Endothelial cell of umbilical vein (primary cell): ENCODE measurements at regions of chr11 and their contacts with region 1.

Region 1: GRCh38 chr11:34791780-34792542 is 124.2 kb downstream of the APIP start:
- DNase-seq: peak; percentile 27
- H3K4me3 ChIP-seq: no peak overlapping the region
- H3K27ac ChIP-seq: no peak overlapping the region
- H3K4me1 ChIP-seq: peaks cover 13% of the 10 kb centered on the region
- H3K27me3 ChIP-seq: no peaks in the 10 kb centered on the region
- CTCF ChIP-seq: peak in 1 of 2 donors; percentile 11
- POLR2A ChIP-seq: no peak

Region 2: GRCh38 chr11:34840736-34841386 is 48.9 kb after region 1 on chr11:
- CTCF ChIA-PET with region 1: interaction called, 12 read pairs
- POLR2A ChIA-PET with region 1: no interaction called
- dilution Hi-C with region 1: no loop called
- intact Hi-C with region 1: loop called (anchors 2 kb)
- DNase-seq: peak; percentile 11
- H3K4me3 ChIP-seq: no peak overlapping the region
- H3K27ac ChIP-seq: no peak overlapping the region
- H3K4me1 ChIP-seq: peaks cover 6% of the 10 kb centered on the region
- H3K27me3 ChIP-seq: no peaks in the 10 kb centered on the region
- CTCF ChIP-seq: peak; percentile 44 to 61
- POLR2A ChIP-seq: no peak

Region 3: DNA sequence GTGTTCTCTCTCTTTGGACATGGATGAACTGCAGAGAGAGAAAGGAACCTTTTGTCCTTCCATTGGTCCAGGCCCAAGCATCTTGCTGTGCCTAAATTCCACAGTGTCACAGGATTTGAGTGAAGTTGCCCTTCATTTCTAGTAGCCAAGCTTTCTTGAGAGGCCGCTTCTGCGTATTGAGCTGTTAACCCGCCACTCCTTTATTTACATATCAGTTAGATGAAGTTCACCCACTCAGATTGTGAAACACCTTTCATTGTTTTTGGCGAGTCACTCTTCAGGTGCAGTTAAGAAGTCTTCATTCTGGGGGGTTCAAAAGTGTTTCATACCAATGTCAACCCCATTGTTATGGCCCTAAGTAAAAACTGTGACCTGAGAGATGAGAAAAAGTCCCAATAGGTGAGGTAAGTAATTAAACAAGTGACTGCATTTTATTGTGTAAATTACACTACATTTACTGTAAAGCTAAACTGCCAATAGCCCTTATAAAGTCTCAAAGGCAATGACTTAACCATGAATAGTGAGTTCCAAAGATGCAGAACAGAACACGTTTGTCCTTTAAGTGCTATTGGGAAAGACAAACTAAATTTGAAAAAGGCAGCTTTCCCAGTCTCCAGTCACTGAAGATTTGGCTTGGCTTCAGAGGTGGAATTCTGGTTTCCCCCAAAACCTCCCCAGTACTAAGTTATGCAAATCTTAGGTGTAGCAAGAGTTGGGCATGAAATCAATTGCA is 63.2 kb after region 1 on chr11:
- CTCF ChIA-PET with region 1: interaction called, 12 read pairs
- POLR2A ChIA-PET with region 1: no interaction called
- dilution Hi-C with region 1: no loop called
- intact Hi-C with region 1: no loop called
- DNase-seq: no peak
- H3K4me3 ChIP-seq: no peak overlapping the region
- H3K27ac ChIP-seq: no peak overlapping the region
- H3K4me1 ChIP-seq: no peaks in the 10 kb centered on the region
- H3K27me3 ChIP-seq: peaks cover 3 to 15% of the 10 kb centered on the region in 2 experiments
- CTCF ChIP-seq: no peak
- POLR2A ChIP-seq: no peak

Region 4: DNA sequence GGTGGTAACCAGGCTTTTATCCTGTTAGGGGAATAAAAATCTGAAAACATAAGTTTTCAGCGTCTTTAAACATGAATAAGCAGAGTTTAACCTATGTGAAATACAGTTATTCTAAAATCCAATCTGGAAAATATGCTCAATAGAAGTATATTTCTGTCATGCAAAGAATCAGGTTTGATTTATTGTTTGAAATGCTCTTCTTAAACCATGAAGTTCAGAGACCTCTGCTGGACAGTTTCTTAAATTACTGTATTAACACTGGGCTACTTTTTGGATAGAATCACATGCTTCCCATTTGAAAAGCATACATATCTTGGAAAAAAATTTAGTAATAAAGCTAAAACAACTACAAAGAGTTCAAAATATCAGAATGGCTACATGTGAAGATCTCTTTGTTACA is 98.9 kb after region 1 on chr11:
- CTCF ChIA-PET with region 1: interaction called, 120 read pairs
- POLR2A ChIA-PET with region 1: no interaction called
- dilution Hi-C with region 1: no loop called
- intact Hi-C with region 1: loop called (anchors 1 kb)
- DNase-seq: peak; percentile 58
- H3K4me3 ChIP-seq: no peak overlapping the region
- H3K27ac ChIP-seq: no peak overlapping the region
- H3K4me1 ChIP-seq: no peaks in the 10 kb centered on the region
- H3K27me3 ChIP-seq: no peaks in the 10 kb centered on the region
- CTCF ChIP-seq: peak in 1 of 2 donors; percentile 12
- POLR2A ChIP-seq: no peak

Region 5: GRCh38 chr11:34899633-34900016 is 107.7 kb after region 1 on chr11:
- CTCF ChIA-PET with region 1: interaction called, 12 read pairs
- POLR2A ChIA-PET with region 1: no interaction called
- dilution Hi-C with region 1: no loop called
- intact Hi-C with region 1: no loop called
- DNase-seq: no peak
- H3K4me3 ChIP-seq: no peak overlapping the region
- H3K27ac ChIP-seq: no peak overlapping the region
- H3K4me1 ChIP-seq: no peaks in the 10 kb centered on the region
- H3K27me3 ChIP-seq: no peaks in the 10 kb centered on the region
- CTCF ChIP-seq: no peak
- POLR2A ChIP-seq: no peak

Region 6: DNA sequence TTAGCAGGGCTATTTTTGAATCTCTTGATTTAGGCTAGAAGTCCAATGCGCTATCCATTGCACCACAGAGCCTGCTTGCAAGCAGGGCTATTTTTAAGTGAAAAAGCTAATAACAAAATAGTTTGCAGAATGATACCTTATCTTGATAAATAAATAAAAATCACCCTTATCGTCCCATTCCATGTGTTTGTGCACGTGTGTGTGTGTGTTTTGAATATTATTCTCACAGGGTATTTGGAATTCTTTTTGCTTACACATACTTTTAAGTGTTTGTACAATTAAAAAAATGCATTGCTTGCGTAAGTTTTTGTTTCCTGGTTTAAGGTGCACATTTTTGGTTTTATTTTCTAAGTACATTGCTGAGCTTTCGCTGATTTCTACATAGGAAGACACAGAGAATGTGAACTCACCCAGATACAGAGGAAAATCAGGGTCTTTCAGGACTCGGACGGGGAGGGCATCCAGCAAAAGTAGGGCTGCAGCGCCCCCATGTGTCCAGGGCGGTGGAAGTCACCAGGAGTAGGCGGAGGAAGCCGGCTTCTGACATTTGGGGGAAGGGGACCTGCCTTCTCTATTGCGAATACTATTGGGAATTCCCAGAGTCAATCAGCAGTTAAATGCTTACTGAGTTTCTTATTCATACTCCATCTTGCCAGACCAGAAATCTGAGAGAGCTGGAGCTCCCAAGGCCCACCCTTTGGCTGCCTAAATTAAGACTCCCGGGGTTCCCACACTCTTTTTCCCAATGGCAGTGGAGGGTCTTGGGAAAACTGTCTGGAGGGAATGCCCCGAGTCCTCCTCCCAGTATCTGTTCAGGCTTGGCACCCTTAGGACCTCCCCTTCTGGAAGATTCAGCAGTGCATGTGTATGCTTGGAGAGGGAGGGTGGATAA is 600.2 kb after region 1 on chr11:
- CTCF ChIA-PET with region 1: interaction called, 3 read pairs
- POLR2A ChIA-PET with region 1: no interaction called
- dilution Hi-C with region 1: no loop called
- intact Hi-C with region 1: loop called (anchors 2 kb)
- DNase-seq: peak; percentile 62
- H3K4me3 ChIP-seq: no peak overlapping the region
- H3K27ac ChIP-seq: no peak overlapping the region
- H3K4me1 ChIP-seq: no peaks in the 10 kb centered on the region
- H3K27me3 ChIP-seq: peaks cover 10 to 14% of the 10 kb centered on the region in 2 experiments
- CTCF ChIP-seq: peak; percentile 80 to 81
- POLR2A ChIP-seq: no peak